ENCODE measurements at regions of chr13 and their contacts with region 1.

Region 1: DNA sequence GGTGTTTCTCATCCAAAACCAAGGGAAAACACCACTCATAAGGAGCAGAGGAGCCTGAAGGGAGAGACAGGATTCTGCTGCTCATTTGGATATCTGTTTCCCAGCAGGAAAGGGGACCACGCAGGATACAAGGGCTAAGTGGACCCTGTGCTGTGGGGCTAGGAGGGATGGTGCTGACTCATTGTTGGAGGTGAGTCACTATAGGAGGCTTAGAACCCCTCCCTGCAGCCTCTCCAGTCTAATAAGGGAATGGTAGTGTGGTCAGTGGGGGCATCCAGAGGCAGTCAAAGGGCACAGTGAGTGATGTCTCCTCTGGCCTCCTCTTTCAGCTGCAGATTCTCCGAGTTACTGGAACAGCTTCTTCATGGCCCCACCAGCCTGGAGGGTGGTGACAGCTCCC is 442.3 kb downstream of the TUBA3C start:
- DNase-seq: peak in 3 of 4 experiments; percentile 5
- ATAC-seq: peak; percentile 67
- H3K4me3 ChIP-seq: no peak overlapping the region
- H3K27ac ChIP-seq: no peak overlapping the region
- H3K4me1 ChIP-seq: no peaks in the 10 kb centered on the region
- H3K27me3 ChIP-seq: no peaks in the 10 kb centered on the region
- CTCF ChIP-seq: no peak
- EP300 ChIP-seq: no peak
- POLR2A ChIP-seq: no peak
- RAD21 ChIP-seq: no peak

Region 2: DNA sequence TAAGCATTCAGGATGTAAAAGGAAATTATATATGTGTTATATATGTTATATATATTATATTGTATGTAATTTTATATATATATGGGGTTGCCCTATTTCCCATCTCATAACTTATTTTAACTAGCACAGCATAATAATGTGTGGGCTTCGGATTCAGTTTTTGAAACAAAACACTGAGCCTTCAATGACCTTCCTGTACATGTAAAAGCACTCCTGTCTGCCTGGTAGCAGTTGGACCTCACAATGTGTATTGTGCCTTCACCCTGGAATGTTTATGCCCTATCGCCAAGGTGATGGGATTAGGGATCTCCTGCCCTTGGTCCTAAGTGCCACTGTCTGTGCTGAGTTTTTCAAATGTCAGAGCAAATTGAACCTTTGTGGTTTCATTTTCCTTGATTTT is 526.4 kb before region 1 on chr13:
- CTCF ChIA-PET with region 1: no interaction called
- POLR2A ChIA-PET with region 1: no interaction called
- in situ Hi-C with region 1: loop called (anchors 5 kb)
- intact Hi-C with region 1: no loop called
- DNase-seq: no peak
- ATAC-seq: no peak
- H3K4me3 ChIP-seq: no peak overlapping the region
- H3K27ac ChIP-seq: no peak overlapping the region
- H3K4me1 ChIP-seq: no peaks in the 10 kb centered on the region
- H3K27me3 ChIP-seq: no peaks in the 10 kb centered on the region
- CTCF ChIP-seq: no peak
- EP300 ChIP-seq: no peak
- POLR2A ChIP-seq: no peak
- RAD21 ChIP-seq: no peak

Region 3: DNA sequence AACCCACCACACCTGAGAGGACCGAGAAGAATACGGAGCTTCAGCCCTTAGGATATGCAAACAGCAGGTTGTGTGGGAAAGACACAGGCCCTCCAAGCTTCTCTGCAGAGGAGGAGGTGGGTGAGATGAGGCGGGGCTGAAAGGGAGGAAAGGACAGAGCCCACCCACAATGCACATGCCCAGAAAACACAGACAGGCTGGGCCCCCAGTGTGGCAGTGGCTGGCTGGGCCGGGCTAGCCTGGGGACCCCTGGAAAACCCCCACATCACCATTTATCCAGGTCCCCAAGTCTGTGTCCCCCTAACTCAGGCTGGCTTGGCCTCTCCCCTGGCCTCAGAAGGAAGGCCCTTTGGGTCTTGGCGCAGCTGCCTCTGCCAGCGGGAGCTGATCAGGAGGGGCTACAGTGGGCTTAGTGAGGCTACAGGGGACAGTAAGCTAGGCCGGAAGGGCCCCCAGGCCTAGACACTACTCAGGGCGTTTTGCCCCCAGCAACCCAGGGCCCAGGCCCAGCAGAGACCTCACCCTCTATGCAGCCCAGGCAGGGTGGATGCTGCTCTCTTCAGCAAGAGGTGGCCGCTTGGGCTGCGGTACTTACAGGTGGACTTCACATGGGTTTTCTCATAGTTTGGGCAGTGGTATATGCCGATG is 322.8 kb after region 1 on chr13:
- CTCF ChIA-PET with region 1: no interaction called
- POLR2A ChIA-PET with region 1: no interaction called
- in situ Hi-C with region 1: no loop called
- intact Hi-C with region 1: no loop called
- DNase-seq: no peak
- ATAC-seq: no peak
- H3K4me3 ChIP-seq: no peak overlapping the region
- H3K27ac ChIP-seq: no peak overlapping the region
- H3K4me1 ChIP-seq: no peaks in the 10 kb centered on the region
- H3K27me3 ChIP-seq: no peaks in the 10 kb centered on the region; a peak in 1 of 5 replicates
- CTCF ChIP-seq: no peak
- EP300 ChIP-seq: no peak
- POLR2A ChIP-seq: no peak
- RAD21 ChIP-seq: no peak

Region 4: DNA sequence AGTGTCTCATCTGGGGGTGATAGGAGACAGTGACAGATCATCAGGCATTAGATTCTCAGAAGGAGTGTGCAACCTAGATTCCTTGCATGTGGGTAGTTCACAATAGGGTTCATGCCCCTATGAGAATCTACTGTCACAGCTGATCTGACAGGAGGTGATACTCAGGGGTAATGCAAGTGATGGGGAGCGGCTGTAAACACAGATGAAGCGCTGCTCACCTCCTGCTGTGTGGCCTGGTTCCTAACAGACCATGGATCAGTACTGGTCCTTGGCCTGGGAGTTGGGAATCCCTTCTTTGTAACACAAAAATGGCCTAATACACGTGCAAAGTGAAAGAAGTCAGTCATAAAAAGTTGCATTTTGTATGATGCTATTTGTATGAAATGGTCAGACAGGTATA is 549.9 kb after region 1 on chr13:
- CTCF ChIA-PET with region 1: no interaction called
- POLR2A ChIA-PET with region 1: no interaction called
- in situ Hi-C with region 1: no loop called
- intact Hi-C with region 1: no loop called
- DNase-seq: no peak
- ATAC-seq: no peak
- H3K4me3 ChIP-seq: no peak overlapping the region
- H3K27ac ChIP-seq: no peak overlapping the region
- H3K4me1 ChIP-seq: no peaks in the 10 kb centered on the region
- H3K27me3 ChIP-seq: no peaks in the 10 kb centered on the region
- CTCF ChIP-seq: no peak
- EP300 ChIP-seq: no peak
- POLR2A ChIP-seq: no peak
- RAD21 ChIP-seq: no peak